ENCODE measurements at regions of chr12 and their contacts with region 1.

Region 1: GRCh38 chr12:48105862-48106680 is at the start of gene SENP1:
- DNase-seq: peak; percentile 85
- H3K4me3 ChIP-seq: peak within 1 kb of the TSS; percentile 41 to 91 (median 81)
- H3K27ac ChIP-seq: peak within 1 kb of the TSS; percentile 98
- H3K4me1 ChIP-seq: peaks cover 12% of the 10 kb centered on the region
- H3K27me3 ChIP-seq: peaks cover 0 to 2% of the 10 kb centered on the region in 2 experiments
- CTCF ChIP-seq: peak in 1 of 2 donors; percentile 11
- POLR2A ChIP-seq: peak; percentile 83
- total RNA-seq, gene SENP1: 20.5 and 21.3 TPM in 2 replicates

Region 2: DNA sequence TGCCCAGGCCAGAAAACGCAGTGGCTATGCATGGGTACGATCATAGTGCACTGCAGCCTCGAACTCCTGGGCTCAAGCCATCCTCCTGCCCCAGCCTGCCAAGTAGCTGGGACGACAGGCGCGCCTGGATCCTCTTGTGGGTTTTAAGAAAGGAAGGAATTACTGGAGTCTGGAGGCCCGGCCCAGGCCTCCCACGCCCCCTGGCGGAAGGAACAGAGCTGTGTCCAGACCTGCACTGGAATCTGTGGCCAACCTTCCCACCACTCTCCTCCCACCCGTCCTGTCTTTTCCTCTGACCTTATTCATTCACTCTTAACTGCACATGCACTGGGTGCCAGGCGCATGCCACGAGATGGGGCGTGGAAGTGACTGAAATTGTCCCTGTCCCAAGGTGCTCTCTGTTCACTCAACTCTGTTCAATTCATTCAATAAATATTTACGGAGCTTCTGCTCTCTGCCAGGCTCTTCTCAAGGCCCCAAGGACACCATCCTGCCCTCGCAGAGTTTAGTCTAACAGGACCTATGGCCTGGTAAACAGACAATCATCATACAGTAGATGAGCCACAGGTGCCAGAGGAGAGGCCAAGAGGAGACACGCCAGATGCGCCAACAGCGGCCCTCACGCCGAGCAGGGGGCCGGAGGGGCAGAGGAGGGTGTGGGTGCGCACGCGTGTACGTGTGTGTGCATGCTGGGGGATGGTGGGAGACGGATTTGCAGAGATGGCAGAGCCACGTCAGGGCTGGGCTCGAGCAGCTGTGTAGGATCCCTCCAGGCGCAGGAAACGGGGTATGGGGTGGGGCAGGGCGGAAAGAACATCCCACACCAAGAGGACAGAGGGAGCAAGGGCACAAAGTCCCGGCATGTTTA is 156.4 kb before region 1 on chr12:
- CTCF ChIA-PET with region 1: no interaction called
- POLR2A ChIA-PET with region 1: no interaction called
- dilution Hi-C with region 1: no loop called
- intact Hi-C with region 1: no loop called
- DNase-seq: peak; percentile 66
- H3K4me3 ChIP-seq: no peak overlapping the region
- H3K27ac ChIP-seq: no peak overlapping the region
- H3K4me1 ChIP-seq: no peaks in the 10 kb centered on the region
- H3K27me3 ChIP-seq: peaks cover 0 to 14% of the 10 kb centered on the region in 2 experiments
- CTCF ChIP-seq: peak; percentile 94 to 98
- POLR2A ChIP-seq: no peak

Region 3: DNA sequence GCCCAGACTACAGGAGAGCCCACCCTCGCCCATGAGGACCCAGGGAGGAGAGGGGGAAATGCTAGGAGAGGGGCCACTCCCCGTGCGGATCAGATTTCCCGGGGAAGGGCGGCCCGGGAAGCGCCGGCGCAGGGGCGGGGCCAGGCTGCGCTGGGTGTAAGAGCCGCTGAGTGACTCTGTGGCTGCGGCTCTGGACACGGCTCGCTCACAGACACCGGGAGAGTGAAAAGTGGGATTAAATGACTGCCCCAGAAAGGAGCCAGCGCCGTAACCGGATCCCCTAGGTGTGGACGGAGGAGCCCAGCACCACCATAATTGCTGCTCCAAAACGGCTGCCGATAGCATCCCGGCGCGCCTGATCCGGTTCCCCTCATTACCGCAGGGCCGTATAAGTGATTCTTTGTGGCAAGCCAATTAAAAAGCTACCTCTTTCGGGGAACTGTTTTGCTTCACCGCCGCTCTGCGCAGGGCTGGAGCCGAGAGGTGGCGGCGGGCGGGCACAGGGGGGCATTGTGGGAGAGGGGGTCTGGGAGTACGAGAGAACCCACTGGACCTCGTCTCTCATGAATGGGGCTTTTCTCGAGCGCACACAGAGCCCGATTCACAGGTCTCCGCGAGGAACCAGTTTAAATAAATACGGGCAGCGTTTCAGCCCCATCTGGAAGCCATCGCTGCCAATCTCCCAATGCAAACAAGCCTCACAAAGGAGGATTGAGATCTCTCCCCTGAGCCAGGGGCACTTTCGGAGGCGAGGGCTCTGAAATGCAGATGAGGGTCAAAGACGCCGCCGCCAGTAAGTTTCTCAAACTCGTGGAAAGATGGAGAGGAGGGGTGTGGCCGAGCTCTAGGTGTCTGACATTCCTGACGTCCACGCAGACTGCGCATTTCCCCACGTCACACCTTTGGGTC is 104.3 kb before region 1 on chr12:
- CTCF ChIA-PET with region 1: no interaction called
- POLR2A ChIA-PET with region 1: no interaction called
- dilution Hi-C with region 1: no loop called
- intact Hi-C with region 1: loop called (anchors 5 kb)
- DNase-seq: peak; percentile 39
- H3K4me3 ChIP-seq: peak overlapping the region; percentile 34 to 66 (median 61)
- H3K27ac ChIP-seq: no peak overlapping the region
- H3K4me1 ChIP-seq: peaks cover 24% of the 10 kb centered on the region
- H3K27me3 ChIP-seq: peaks cover 75 to 93% of the 10 kb centered on the region in 2 experiments
- CTCF ChIP-seq: no peak
- POLR2A ChIP-seq: no peak

Region 4: GRCh38 chr12:48037267-48037915 is 68.7 kb before region 1 on chr12:
- CTCF ChIA-PET with region 1: no interaction called
- POLR2A ChIA-PET with region 1: no interaction called
- dilution Hi-C with region 1: no loop called
- intact Hi-C with region 1: no loop called
- DNase-seq: no peak
- H3K4me3 ChIP-seq: no peak overlapping the region
- H3K27ac ChIP-seq: no peak overlapping the region
- H3K4me1 ChIP-seq: no peaks in the 10 kb centered on the region
- H3K27me3 ChIP-seq: peaks cover 0 to 2% of the 10 kb centered on the region in 2 experiments
- CTCF ChIP-seq: no peak
- POLR2A ChIP-seq: no peak

Region 5: DNA sequence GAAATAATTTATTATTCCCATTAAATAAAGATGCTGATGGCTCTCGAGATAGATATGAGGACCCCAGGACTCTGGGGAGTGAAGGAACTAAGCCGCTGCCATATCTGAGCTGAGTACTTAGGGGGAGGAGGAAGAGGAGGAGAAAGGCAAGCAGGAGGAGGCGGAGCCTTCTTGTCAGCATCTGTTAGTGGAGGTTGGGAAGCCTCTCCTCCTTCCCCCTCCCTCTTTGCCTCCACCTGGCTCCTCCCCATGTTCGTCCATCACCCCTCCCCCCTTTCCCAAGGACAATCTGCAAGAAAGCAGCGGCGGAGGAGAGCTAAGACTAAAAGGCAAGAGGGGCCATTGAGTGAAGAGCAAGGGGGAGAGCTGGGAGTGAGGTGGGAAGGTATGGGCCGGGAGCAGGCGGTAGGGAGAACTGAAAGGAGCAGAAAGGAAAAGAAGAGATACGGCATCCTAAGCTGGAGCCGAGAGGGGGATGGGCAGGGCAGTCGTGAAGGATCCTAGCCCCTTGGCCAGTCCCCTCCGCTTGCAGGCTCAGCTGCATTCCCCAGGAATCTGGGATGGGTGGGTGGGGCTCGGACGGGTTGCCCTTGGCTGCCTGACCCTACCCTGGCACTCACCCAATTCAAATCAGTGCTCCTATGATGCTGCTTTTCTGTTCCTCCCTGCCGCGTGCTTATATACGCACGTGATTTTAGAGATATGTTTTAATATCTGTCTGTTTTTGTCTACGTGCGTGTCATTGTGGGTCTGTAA is 13.2 kb after region 1 on chr12 and contains the start of gene PFKM:
- CTCF ChIA-PET with region 1: interaction called, 5 read pairs
- POLR2A ChIA-PET with region 1: no interaction called
- dilution Hi-C with region 1: no loop called
- intact Hi-C with region 1: loop called (anchors 1 kb)
- DNase-seq: peak; percentile 91
- H3K4me3 ChIP-seq: peak within 1 kb of the TSS; percentile 80 to 94 (median 91)
- H3K27ac ChIP-seq: peak within 1 kb of the TSS; percentile 25
- H3K4me1 ChIP-seq: peaks cover 12% of the 10 kb centered on the region
- H3K27me3 ChIP-seq: peaks cover 2 to 5% of the 10 kb centered on the region in 2 experiments
- CTCF ChIP-seq: no peak
- POLR2A ChIP-seq: peak; percentile 81
- total RNA-seq, gene PFKM: 74.4 and 76.7 TPM in 2 replicates